ENCODE measurements at regions of chr19 and their contacts with region 1.

Region 1: GRCh38 chr19:35135389-35135909 is 590 bp upstream of the LGI4 start:
- DNase-seq: peak; percentile 66
- H3K4me3 Mint-ChIP-seq: no peak overlapping the region
- H3K27ac Mint-ChIP-seq: no peak overlapping the region
- H3K4me1 Mint-ChIP-seq: peaks cover 8% of the 10 kb centered on the region
- H3K27me3 Mint-ChIP-seq: peaks cover 10% of the 10 kb centered on the region

Region 2: GRCh38 chr19:35066691-35067563 is 68.5 kb before region 1 on chr19:
- CTCF ChIA-PET with region 1: interaction called, 12 read pairs
- POLR2A ChIA-PET with region 1: no interaction called
- DNase-seq: peak; percentile 90
- H3K4me3 Mint-ChIP-seq: no peak overlapping the region
- H3K27ac Mint-ChIP-seq: peak overlapping the region; percentile 36
- H3K4me1 Mint-ChIP-seq: peaks cover 8% of the 10 kb centered on the region
- H3K27me3 Mint-ChIP-seq: no peaks in the 10 kb centered on the region

Region 3: DNA sequence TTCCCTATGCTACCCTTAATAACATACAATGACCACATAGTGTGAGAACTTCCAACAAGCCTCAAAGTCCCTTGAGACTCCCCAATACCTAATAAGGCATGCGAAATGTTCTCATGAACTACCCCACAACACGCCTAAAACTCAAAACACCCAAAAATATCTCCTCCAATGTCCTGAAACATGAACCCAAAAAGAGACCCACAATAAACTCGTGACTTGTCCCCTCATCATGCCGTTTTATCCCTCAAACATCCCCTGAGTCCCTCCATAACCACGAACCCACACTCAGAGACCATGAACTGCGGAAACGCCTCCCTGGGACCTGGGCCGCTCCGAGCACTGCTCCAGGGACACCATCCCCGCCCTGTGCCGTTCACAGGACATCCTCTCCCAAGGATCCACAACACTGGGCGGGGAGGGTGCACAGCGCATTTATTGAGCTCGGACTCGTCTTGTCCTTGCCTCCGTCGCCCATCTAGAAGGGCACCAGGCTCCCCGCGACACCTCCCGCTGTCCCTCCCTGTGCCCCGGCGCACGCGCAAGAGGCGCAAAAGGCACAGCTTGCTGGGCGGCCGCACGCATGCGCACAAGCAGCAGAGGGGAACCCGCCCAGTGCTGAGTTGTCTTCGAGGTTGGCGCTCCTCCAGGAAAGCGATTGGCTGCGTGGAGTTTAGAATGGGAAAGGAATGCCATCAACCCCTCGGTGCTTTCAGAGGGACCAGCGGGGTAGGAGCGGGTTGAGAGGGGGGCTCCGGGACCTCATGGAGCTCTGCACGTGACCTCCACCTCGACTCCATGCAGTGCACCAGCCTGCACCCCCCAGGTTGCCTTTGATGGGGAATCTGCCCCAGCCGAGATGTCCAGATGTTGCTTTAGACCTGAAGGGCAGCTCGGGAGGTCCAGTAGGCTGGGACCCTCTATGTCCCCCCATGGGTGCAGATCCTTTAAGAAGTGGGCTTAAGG is 11.1 kb before region 1 on chr19:
- CTCF ChIA-PET with region 1: interaction called, 28 read pairs
- POLR2A ChIA-PET with region 1: no interaction called
- DNase-seq: peak; percentile 86
- H3K4me3 Mint-ChIP-seq: peak overlapping the region; percentile 55
- H3K27ac Mint-ChIP-seq: peak overlapping the region; percentile 66
- H3K4me1 Mint-ChIP-seq: peaks cover 16% of the 10 kb centered on the region
- H3K27me3 Mint-ChIP-seq: no peaks in the 10 kb centered on the region

Region 4: GRCh38 chr19:35195830-35196229 is 60.4 kb after region 1 on chr19:
- CTCF ChIA-PET with region 1: no interaction called
- POLR2A ChIA-PET with region 1: no interaction called
- DNase-seq: no peak
- H3K4me3 Mint-ChIP-seq: no peak overlapping the region
- H3K27ac Mint-ChIP-seq: no peak overlapping the region
- H3K4me1 Mint-ChIP-seq: peaks cover 17% of the 10 kb centered on the region
- H3K27me3 Mint-ChIP-seq: peaks cover 9% of the 10 kb centered on the region